Transverse colon (tissue), 4 donors: ENCODE measurements at regions of chr7 and their contacts with region 1.

Region 1: DNA sequence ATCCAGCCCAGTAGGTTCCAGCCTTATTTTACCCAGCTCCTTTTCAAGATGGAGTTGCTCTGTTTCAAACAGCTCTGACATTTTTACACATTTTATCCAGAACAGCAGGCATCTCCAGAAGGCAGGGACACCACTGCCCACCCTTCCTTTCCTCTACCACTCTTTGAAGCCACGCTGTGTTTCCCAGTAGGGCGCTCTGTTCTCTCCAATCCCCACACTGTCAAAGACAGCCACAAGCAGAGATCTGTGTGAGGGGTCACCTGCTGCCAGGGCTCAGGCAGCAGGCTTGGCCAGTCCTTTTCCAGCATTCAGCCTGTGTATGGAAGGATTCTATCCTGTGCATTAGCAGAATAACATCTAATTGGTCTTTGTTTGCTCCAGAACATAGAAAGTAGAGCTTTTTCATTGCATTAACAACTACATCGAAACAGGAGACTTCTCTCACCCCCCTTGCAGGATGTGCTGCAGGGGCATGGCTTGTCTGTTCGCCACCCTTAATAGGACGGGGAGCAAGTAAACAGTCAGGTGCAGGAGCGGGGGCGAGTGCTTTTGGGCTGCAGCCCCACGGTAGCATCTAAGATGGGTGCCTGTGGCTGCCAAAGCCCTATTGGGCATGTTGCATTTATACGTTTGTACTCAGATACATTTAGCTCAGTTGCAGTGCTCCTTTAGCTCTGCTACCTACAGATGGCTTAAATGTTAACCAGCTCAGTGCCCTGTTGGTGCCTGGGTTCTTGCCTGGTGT is 326.1 kb downstream of the GALNT17 start:
- DNase-seq: no peak
- H3K4me3 ChIP-seq: no peak overlapping the region
- H3K27ac ChIP-seq: no peak overlapping the region
- H3K4me1 ChIP-seq: no peaks in the 10 kb centered on the region
- H3K27me3 ChIP-seq: no peaks in the 10 kb centered on the region
- CTCF ChIP-seq: no peak
- EP300 ChIP-seq: no peak
- POLR2A ChIP-seq: no peak

Region 2: DNA sequence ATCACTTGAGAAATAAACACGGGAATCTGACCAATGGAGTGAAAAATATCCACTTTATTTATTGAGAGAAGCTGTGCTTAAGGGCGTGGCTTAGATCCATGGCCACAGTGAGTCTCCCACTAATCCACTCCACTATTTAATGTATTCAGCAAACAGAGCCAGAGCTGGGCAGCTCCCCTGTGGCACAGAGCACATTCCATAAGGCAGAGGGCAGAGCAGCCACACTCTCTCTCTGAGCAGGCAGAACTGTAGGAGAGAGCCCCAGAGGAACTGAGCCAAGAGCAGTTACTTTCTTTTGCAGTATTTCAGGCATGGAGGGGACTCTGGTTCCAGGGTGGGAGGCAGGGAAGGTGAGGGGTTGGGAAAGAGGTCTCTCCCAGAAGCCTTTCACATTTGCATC is 220.1 kb before region 1 on chr7:
- in situ Hi-C with region 1: no loop called
- intact Hi-C with region 1: no loop called
- DNase-seq: no peak
- H3K4me3 ChIP-seq: no peak overlapping the region
- H3K27ac ChIP-seq: peak overlapping the region; percentile 18 to 75 (median 65)
- H3K4me1 ChIP-seq: peaks cover 0 to 9% (median 5%) of the 10 kb centered on the region in 4 donors
- H3K27me3 ChIP-seq: no peaks in the 10 kb centered on the region
- CTCF ChIP-seq: peak in 1 of 5 experiments; percentile 27
- EP300 ChIP-seq: no peak
- POLR2A ChIP-seq: no peak

Region 3: GRCh38 chr7:71442492-71443190 is 15.4 kb before region 1 on chr7:
- in situ Hi-C with region 1: no loop called
- intact Hi-C with region 1: no loop called
- DNase-seq: no peak
- H3K4me3 ChIP-seq: no peak overlapping the region
- H3K27ac ChIP-seq: no peak overlapping the region
- H3K4me1 ChIP-seq: no peaks in the 10 kb centered on the region
- H3K27me3 ChIP-seq: no peaks in the 10 kb centered on the region
- CTCF ChIP-seq: no peak
- EP300 ChIP-seq: no peak
- POLR2A ChIP-seq: no peak

Region 4: DNA sequence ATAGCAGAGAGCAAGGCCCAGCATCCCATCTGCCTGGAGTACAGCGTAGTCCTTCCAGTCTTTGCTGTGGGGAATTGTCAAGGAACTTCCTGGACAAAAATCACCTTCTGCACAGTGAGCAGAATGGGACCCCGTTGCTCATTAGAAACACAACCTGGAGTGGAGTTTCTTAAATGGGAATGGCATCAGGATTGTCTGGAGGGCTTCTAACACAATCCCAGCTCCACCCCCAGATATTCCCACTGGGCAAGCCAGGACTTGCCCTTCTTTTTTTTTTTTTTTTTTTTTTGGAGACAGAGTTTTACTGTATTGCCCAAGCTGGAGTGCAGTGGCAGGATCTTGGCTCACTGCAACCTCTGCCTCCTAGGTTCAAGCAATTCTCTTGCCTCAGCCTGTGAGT is 30.3 kb after region 1 on chr7:
- in situ Hi-C with region 1: no loop called
- intact Hi-C with region 1: no loop called
- DNase-seq: no peak
- H3K4me3 ChIP-seq: no peak overlapping the region
- H3K27ac ChIP-seq: no peak overlapping the region
- H3K4me1 ChIP-seq: no peaks in the 10 kb centered on the region
- H3K27me3 ChIP-seq: no peaks in the 10 kb centered on the region
- CTCF ChIP-seq: no peak
- EP300 ChIP-seq: no peak
- POLR2A ChIP-seq: no peak

Region 5: GRCh38 chr7:71511361-71511807 is 53.4 kb after region 1 on chr7:
- in situ Hi-C with region 1: loop called in 1 of 4 experiments (anchors 10 kb)
- intact Hi-C with region 1: no loop called
- DNase-seq: no peak
- H3K4me3 ChIP-seq: no peak overlapping the region
- H3K27ac ChIP-seq: no peak overlapping the region
- H3K4me1 ChIP-seq: no peaks in the 10 kb centered on the region
- H3K27me3 ChIP-seq: no peaks in the 10 kb centered on the region
- CTCF ChIP-seq: no peak
- EP300 ChIP-seq: no peak
- POLR2A ChIP-seq: no peak